ENCODE measurements at regions of chrX and their contacts with region 1.

Region 1: GRCh38 chrX:78619834-78620233 is 39.3 kb downstream of the RTL3 start:
- DNase-seq: peak in 1 of 2 donors; percentile 60
- ATAC-seq: no peak
- H3K4me3 ChIP-seq: no peak overlapping the region
- H3K27ac ChIP-seq: no peak overlapping the region
- H3K4me1 ChIP-seq: no peaks in the 10 kb centered on the region
- H3K27me3 ChIP-seq: no peaks in the 10 kb centered on the region

Region 2: DNA sequence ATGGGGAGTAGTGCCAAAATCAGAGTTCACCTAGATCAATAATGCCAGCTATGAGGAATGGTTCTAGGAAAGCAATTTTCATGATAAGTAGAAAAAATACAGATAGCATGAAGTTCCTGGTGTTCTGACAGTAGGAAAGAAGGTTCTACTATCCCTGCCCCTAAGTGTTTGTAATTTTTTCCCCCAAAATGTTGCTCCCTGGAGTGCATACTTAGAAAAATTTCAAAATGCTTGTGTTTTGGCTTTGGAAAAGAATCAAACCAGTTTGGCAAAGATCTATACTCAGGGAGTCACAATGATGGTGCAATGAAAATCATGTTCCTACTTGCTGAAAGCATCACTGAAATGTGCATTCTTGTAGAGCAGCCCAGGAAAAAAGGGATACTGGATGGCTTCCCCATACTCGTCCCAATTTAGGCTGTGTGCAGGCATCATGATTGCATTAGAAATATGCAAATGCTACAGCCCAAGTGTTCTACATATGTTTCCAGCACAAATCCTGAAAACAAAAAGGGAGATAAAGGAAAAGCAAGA is 202.4 kb after region 1 on chrX:
- intact Hi-C with region 1: no loop called
- DNase-seq: no peak
- ATAC-seq: no peak
- H3K4me3 ChIP-seq: no peak overlapping the region
- H3K27ac ChIP-seq: no peak overlapping the region
- H3K4me1 ChIP-seq: no peaks in the 10 kb centered on the region
- H3K27me3 ChIP-seq: no peaks in the 10 kb centered on the region

Region 3: GRCh38 chrX:79444694-79445210 is 824.9 kb after region 1 on chrX:
- intact Hi-C with region 1: loop called in 1 of 2 experiments (anchors 10 kb)
- DNase-seq: no peak
- ATAC-seq: no peak
- H3K4me3 ChIP-seq: no peak overlapping the region
- H3K27ac ChIP-seq: no peak overlapping the region
- H3K4me1 ChIP-seq: no peaks in the 10 kb centered on the region
- H3K27me3 ChIP-seq: no peaks in the 10 kb centered on the region

Measured in aorta (tissue), 5 donors.